ENCODE measurements at regions of chr10 and their contacts with region 1.

Region 1: GRCh38 chr10:97553575-97554031 is 19.0 kb upstream of the ANKRD2 start:
- DNase-seq: peak; percentile 78
- H3K4me3 Mint-ChIP-seq: no peak overlapping the region
- H3K27ac Mint-ChIP-seq: peak overlapping the region; percentile 46
- H3K4me1 Mint-ChIP-seq: peaks cover 28% of the 10 kb centered on the region
- H3K27me3 Mint-ChIP-seq: no peaks in the 10 kb centered on the region
- CTCF ChIP-seq: peak; percentile 88

Region 2: DNA sequence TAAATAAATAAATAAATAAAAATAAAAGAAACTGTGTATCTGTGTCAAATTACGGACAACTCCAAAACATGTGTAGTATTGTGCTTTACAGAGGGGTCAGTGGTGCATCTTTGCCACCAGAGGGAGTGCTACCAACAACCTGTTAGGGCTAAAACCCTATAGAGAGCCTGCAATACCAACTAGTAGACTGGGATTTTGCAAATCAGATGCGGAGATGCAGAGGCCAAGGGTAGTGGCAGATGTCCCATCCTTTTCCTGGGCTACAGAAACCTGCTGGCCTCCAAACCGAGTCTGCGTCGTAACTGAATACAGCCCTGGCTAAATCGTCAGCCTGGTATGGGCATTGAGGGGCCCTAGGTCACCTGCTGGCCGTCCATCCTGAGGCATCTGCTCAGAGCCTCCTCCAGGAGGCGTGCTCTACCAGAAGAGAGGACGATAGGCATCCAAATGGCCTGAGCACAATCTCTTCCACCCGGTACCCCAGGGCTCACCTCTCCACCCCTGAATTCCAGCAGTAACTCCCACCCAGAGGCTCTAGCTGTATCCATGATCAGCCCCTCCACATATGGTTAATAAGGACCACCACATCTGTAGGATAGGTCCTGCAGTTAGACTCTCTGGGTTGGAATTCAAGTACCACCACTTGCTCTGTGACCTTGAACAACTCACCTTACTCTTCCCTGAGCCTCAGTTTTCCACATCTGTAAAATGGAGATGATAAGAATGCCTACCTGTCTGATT is 146.2 kb before region 1 on chr10:
- CTCF ChIA-PET with region 1: interaction called, 6 read pairs
- POLR2A ChIA-PET with region 1: no interaction called
- intact Hi-C with region 1: loop called (anchors 1 kb)
- DNase-seq: peak; percentile 85
- H3K4me3 Mint-ChIP-seq: no peak overlapping the region
- H3K27ac Mint-ChIP-seq: no peak overlapping the region
- H3K4me1 Mint-ChIP-seq: no peaks in the 10 kb centered on the region
- H3K27me3 Mint-ChIP-seq: no peaks in the 10 kb centered on the region
- CTCF ChIP-seq: peak; percentile 76

Region 3: DNA sequence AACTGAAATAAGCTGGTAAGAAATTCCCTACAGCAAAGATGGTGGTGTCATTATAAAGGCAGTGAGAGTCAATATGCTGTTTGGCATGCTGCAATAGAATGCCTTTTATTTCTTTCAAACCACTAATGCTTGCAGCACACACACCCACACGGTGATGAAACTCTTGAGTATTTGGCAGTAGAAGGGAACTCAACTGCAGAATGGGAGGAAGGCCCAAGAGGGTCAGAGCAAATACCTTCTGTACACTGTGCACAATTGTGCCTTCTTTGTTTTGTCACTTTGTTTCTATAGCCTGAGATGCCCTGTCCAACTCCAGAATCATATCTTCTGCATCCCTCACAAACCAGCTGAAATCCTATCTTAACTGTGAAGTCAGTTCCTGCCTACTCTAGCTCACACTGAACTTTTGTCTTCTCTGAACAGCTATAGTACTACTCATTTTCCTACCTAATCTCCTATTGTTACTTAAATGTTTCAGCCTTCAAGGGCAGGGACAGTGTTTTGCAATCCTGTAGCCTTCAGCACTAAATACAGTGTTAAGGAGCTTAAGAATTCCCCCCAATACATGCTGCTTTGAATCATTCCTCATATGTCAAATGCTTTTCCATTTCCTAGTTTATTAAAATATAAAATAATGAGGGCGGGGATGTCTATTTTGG is 77.5 kb before region 1 on chr10:
- CTCF ChIA-PET with region 1: interaction called, 34 read pairs
- POLR2A ChIA-PET with region 1: interaction called, 6 read pairs
- intact Hi-C with region 1: no loop called
- DNase-seq: peak; percentile 57
- H3K4me3 Mint-ChIP-seq: no peak overlapping the region
- H3K27ac Mint-ChIP-seq: peak overlapping the region; percentile 46
- H3K4me1 Mint-ChIP-seq: peaks cover 19% of the 10 kb centered on the region
- H3K27me3 Mint-ChIP-seq: no peaks in the 10 kb centered on the region
- CTCF ChIP-seq: no peak

Region 4: GRCh38 chr10:97518301-97519043 is 35.1 kb before region 1 on chr10:
- CTCF ChIA-PET with region 1: interaction called, 12 read pairs
- POLR2A ChIA-PET with region 1: interaction called, 3 read pairs
- intact Hi-C with region 1: no loop called
- DNase-seq: peak; percentile 77
- H3K4me3 Mint-ChIP-seq: no peak overlapping the region
- H3K27ac Mint-ChIP-seq: peak overlapping the region; percentile 75
- H3K4me1 Mint-ChIP-seq: peaks cover 13% of the 10 kb centered on the region
- H3K27me3 Mint-ChIP-seq: no peaks in the 10 kb centered on the region
- CTCF ChIP-seq: no peak

Region 5: GRCh38 chr10:97564776-97565175 is 11.2 kb after region 1 on chr10:
- CTCF ChIA-PET with region 1: interaction called, 52 read pairs
- POLR2A ChIA-PET with region 1: interaction called, 3 read pairs
- intact Hi-C with region 1: no loop called
- DNase-seq: no peak
- H3K4me3 Mint-ChIP-seq: no peak overlapping the region
- H3K27ac Mint-ChIP-seq: no peak overlapping the region
- H3K4me1 Mint-ChIP-seq: peaks cover 7% of the 10 kb centered on the region
- H3K27me3 Mint-ChIP-seq: no peaks in the 10 kb centered on the region
- CTCF ChIP-seq: no peak